Activated CD4-positive, alpha-beta memory T cell treated with anti-CD3 and anti-CD28 coated beads, Interleukin-2, amount 10 ng/mL, durations not matched to agents 7 days and 5 days (primary cell): ENCODE measurements at regions of chr11 and their contacts with region 1.

Region 1: DNA sequence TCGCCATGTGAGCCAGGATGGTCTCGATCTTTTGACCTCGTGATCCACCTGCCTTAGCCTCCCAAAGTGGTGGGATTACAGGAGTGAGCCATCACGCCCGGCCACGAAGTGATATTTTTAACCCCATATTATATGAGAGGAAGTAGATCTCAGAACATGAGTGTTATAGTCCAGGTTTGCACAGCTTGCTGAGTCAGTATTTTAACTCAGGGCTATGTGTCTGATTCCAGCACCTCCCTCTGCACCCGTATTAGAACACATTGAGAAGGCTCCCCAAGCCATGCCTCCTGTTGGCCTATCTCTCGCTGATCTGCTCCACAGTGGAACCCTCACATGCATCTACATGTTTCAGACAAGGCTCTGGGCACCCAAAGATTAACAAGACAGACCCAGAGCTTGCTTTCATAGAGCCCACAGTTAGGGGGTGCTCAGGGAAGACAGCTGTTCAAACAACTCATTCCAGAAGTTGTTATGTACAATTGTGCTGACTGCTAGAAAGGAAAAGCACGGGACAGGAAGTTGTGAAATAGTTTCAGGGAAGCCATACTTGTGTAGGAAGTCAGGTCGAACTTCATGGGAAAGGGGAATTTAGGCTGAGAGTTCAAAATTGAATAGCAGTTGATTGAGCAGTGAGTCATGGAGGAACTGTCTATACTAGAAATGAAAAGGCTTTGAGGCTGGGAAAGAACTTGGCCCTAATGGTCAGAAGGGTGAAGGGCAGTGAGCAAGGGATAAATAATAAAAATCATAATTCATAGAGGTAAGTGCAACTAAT is 49.3 kb upstream of the CLPB start:
- DNase-seq: no peak
- H3K4me3 Mint-ChIP-seq: no peak overlapping the region
- H3K27ac Mint-ChIP-seq: peak overlapping the region; percentile 45
- H3K4me1 Mint-ChIP-seq: peaks cover 18% of the 10 kb centered on the region
- H3K27me3 Mint-ChIP-seq: peaks cover 8% of the 10 kb centered on the region

Region 2: DNA sequence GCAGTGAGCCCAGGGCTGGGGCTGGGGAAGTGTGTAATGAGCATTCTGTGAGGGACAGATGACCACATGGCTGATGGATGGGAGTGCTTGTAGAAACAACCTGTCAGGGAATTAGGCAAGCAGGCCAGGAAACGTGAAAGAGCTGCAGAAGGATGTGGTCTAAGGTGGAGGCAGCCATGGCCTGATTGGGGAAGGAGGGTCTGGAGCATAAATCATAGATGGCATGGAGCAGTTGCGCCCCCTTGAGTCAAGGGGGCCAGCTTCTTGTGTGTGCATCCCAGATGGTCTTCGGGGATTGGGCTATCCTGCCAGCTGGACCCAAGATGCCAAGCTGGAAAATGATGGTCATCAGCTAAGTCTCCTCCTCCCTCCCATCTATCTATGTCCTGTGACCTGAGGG is 70.1 kb after region 1 on chr11:
- CTCF ChIA-PET with region 1: interaction called, 14 read pairs
- POLR2A ChIA-PET with region 1: no interaction called
- DNase-seq: peak; percentile 58
- H3K4me3 Mint-ChIP-seq: no peak overlapping the region
- H3K27ac Mint-ChIP-seq: no peak overlapping the region
- H3K4me1 Mint-ChIP-seq: peaks cover 15% of the 10 kb centered on the region
- H3K27me3 Mint-ChIP-seq: peaks cover 25% of the 10 kb centered on the region

Region 3: DNA sequence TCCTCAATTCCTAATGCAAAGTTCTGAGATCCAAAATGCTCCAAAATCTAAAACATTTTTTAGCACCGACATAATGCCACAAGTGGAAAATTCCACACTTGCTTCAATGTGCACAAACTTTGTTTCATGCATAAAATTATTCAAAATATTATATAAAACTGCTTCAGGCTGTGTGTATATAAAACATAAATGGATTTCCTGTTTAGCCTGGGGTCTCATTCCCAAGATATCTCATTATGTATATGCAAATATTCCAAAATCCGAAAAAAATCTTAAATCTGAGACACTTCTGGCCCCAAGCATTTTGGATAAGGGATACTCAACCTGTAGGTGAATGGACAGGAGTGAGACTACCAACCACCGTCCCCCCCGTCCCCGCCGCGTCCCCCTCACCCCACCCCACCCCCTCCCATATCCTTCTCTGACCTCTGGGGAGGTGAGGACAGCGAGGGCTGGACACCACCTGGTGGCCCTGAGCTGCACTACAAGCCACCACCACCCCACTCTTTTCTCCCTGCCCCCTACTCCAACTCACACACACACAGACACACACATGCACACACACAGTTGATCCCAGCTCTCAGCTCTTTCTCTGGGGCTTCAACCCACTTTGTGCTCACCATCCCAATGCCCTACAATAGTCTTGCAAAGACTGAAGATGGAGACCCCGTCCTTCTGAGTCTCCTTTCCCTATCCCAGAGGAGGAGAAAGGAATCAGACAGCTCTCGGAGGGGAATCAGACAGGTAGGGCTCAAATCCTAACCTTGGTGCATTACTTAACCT is 89.7 kb after region 1 on chr11:
- CTCF ChIA-PET with region 1: interaction called, 22 read pairs
- POLR2A ChIA-PET with region 1: interaction called, 3 read pairs
- DNase-seq: peak; percentile 54
- H3K4me3 Mint-ChIP-seq: no peak overlapping the region
- H3K27ac Mint-ChIP-seq: no peak overlapping the region
- H3K4me1 Mint-ChIP-seq: peaks cover 43% of the 10 kb centered on the region
- H3K27me3 Mint-ChIP-seq: peaks cover 11% of the 10 kb centered on the region